HepG2 (cell line): ENCODE measurements at regions of chr13 and their contacts with region 1.

Region 1: GRCh38 chr13:46229251-46229650 is 17.5 kb downstream of the LRRC63 start:
- DNase-seq: no peak
- ATAC-seq: no peak
- H3K4me3 ChIP-seq: no peak overlapping the region
- H3K27ac ChIP-seq: no peak overlapping the region
- H3K4me1 ChIP-seq: no peaks in the 10 kb centered on the region
- H3K27me3 ChIP-seq: no peaks in the 10 kb centered on the region
- CTCF ChIP-seq: no peak
- EP300 ChIP-seq: no peak
- POLR2A ChIP-seq: no peak
- RAD21 ChIP-seq: no peak

Region 2: GRCh38 chr13:44801990-44802389 is 1427.3 kb before region 1 on chr13:
- CTCF ChIA-PET with region 1: no interaction called
- POLR2A ChIA-PET with region 1: no interaction called
- in situ Hi-C with region 1: no loop called
- intact Hi-C with region 1: no loop called
- DNase-seq: no peak
- ATAC-seq: no peak
- H3K4me3 ChIP-seq: no peak overlapping the region
- H3K27ac ChIP-seq: no peak overlapping the region
- H3K4me1 ChIP-seq: no peaks in the 10 kb centered on the region
- H3K27me3 ChIP-seq: no peaks in the 10 kb centered on the region; a peak in 1 of 5 replicates
- CTCF ChIP-seq: no peak
- EP300 ChIP-seq: no peak
- POLR2A ChIP-seq: no peak
- RAD21 ChIP-seq: no peak

Region 3: GRCh38 chr13:47415048-47415447 is 1185.8 kb after region 1 on chr13:
- CTCF ChIA-PET with region 1: no interaction called
- POLR2A ChIA-PET with region 1: no interaction called
- in situ Hi-C with region 1: no loop called
- intact Hi-C with region 1: loop called (anchors 5 kb)
- DNase-seq: no peak
- ATAC-seq: no peak
- H3K4me3 ChIP-seq: no peak overlapping the region
- H3K27ac ChIP-seq: no peak overlapping the region
- H3K4me1 ChIP-seq: no peaks in the 10 kb centered on the region
- H3K27me3 ChIP-seq: no peaks in the 10 kb centered on the region
- CTCF ChIP-seq: no peak
- EP300 ChIP-seq: no peak
- POLR2A ChIP-seq: no peak
- RAD21 ChIP-seq: no peak